Right ventricle myocardium inferior (tissue), 1 donor: ENCODE measurements at regions of chr17 and their contacts with region 1.

Region 1: GRCh38 chr17:4733073-4733531 is 1.9 kb downstream of the MED11 start:
- DNase-seq: peak; percentile 80
- ATAC-seq: no peak

Region 2: DNA sequence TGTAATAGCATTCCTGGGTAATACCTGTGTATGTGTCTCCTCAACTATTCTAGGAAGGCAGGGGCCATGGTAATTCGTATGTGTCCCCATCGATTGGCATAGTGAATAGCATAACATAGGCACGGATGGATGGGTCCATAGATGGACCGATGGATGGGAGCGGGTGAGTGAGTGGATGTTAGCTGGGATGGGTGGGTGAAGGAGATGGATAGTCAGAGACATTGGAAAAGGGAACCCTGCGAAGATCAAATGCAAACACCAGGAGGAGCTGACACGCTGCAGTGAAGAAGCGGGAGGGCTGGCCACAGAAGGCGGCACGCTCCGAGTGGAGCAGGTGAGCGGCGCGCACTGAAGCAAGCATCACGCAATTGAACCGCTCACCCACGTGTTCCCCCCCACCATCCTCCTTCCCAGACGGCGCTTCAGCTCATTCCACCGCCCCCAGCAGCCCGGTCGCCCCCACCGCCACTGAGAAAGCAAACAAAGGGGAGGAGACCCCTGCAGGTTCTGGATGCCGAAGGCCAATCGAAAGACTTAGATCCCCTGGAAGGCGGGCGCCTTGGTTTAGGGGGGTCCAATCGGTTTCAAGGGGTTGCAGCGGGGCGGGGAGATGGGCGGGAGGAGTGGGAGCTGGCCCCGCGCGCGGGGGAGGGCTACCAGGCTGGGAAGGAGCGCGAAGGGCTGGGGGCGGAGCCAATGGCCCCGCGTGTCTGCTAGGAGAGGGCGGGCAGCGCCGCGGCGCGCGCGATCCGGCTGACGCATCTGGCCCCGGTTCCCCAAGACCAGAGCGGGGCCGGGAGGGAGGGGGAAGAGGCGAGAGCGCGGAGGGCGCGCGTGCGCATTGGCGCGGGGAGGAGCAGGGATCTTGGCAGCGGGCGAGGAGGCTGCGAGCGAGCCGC is 23.1 kb before region 1 on chr17 and contains the start of gene ARRB2:
- intact Hi-C with region 1: loop called (anchors 1 kb)
- DNase-seq: peak; percentile 100
- ATAC-seq: peak; percentile 97
- total RNA-seq, gene ARRB2: 28.3 TPM

Region 3: GRCh38 chr17:4789901-4790704 is 57.0 kb after region 1 on chr17:
- intact Hi-C with region 1: loop called (anchors 5 kb)
- DNase-seq: peak; percentile 94
- ATAC-seq: peak; percentile 95

Region 4: GRCh38 chr17:4891411-4892342 is 158.6 kb after region 1 on chr17:
- intact Hi-C with region 1: loop called (anchors 1 kb)
- DNase-seq: no peak
- ATAC-seq: no peak

Region 5: GRCh38 chr17:4903051-4903818 is 170.1 kb after region 1 on chr17 and contains the start of gene CHRNE:
- intact Hi-C with region 1: loop called (anchors 2 kb)
- DNase-seq: no peak
- ATAC-seq: peak; percentile 38
- total RNA-seq, gene CHRNE: 0.41 TPM